Activated CD8-positive, alpha-beta T cell treated with anti-CD3 and anti-CD28 coated beads, Interleukin-2, amount 10 ng/mL, durations not matched to agents 7 days and 5 days (primary cell): ENCODE measurements at regions of chr11 and their contacts with region 1.

Region 1: GRCh38 chr11:128695539-128696221 is 1.8 kb downstream of the FLI1 start:
- DNase-seq: peak; percentile 64
- ATAC-seq: peak; percentile 47
- H3K4me3 Mint-ChIP-seq: peak overlapping the region; percentile 93
- H3K27ac Mint-ChIP-seq: peak overlapping the region; percentile 96
- H3K4me1 Mint-ChIP-seq: peaks cover 69% of the 10 kb centered on the region
- H3K27me3 Mint-ChIP-seq: peaks cover 11% of the 10 kb centered on the region

Region 2: GRCh38 chr11:128318856-128319474 is 376.7 kb before region 1 on chr11:
- CTCF ChIA-PET with region 1: no interaction called
- POLR2A ChIA-PET with region 1: no interaction called
- DNase-seq: peak; percentile 84
- ATAC-seq: peak; percentile 84
- H3K4me3 Mint-ChIP-seq: peak overlapping the region; percentile 7
- H3K27ac Mint-ChIP-seq: peak overlapping the region; percentile 66
- H3K4me1 Mint-ChIP-seq: peaks cover 84% of the 10 kb centered on the region
- H3K27me3 Mint-ChIP-seq: no peaks in the 10 kb centered on the region

Region 3: DNA sequence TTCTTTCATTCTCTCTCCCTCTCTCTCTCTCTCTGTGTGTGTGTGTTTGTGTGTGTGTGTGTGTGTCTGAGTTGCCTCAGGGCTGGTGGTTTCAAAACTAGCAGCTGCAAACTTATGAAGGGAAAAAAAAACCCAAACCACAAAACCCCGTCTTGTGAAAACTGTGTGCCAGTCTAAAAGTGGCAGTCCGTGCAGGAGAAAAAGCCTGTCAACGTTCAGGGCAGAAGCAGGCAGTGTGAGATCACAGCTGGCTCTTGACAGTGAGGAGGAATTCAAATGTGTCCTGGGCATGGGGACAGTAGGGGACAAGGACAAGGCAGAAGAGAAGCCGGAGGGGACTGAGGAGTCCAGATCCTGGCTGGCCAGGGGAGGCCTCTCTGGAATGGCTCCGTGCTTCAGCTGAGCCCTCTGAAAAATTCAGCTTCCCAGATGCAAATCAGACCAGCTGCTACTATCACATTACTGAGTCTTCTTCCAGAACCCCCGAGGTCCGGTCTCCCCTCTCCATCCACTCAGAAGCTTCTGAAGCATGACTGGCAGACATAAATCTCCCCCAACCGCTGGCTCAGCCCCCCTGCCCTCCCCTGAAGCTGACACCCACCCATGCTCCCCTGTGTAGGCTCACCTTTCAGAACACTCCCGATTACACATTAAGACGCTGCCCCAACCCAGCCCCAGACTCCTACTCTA is 30.1 kb after region 1 on chr11:
- CTCF ChIA-PET with region 1: interaction called, 3 read pairs
- POLR2A ChIA-PET with region 1: interaction called, 14 read pairs
- DNase-seq: peak; percentile 78
- ATAC-seq: peak; percentile 47
- H3K4me3 Mint-ChIP-seq: peak overlapping the region; percentile 66
- H3K27ac Mint-ChIP-seq: peak overlapping the region; percentile 91
- H3K4me1 Mint-ChIP-seq: peaks cover 99% of the 10 kb centered on the region
- H3K27me3 Mint-ChIP-seq: no peaks in the 10 kb centered on the region

Region 4: DNA sequence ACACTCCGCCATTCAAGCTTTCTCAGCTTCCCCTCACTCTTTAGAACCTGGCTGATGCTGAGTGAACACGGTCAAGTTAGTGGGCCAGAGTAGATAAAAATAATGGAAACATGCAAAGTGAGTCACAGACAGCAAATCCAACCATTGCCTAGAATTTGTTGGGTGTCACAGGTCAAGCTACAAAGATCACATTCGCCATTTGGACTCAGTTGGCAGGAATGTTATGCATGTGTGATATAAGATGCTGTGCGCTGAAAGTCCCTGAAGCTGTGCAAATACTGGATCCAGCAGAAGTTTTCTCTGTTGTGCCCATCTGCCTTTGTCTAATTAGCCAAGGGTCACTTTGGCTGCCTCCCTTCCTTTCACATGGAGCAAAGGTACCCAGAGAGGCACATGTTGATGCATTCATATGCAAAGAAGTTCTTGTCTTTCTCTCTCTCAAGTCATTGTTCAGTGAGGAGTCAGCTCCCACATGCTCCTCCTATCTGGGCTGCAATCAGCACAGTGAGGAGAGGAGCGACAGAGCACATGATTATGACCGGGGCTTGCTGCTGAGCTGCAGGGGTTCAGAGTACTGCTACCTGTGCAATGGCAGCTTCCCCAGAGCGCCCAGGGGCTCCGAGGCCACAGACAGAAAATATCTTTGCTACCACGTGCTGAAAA is 37.9 kb after region 1 on chr11:
- CTCF ChIA-PET with region 1: interaction called, 6 read pairs
- POLR2A ChIA-PET with region 1: interaction called, 14 read pairs
- DNase-seq: peak; percentile 51
- ATAC-seq: peak; percentile 53
- H3K4me3 Mint-ChIP-seq: peak overlapping the region; percentile 61
- H3K27ac Mint-ChIP-seq: peak overlapping the region; percentile 78
- H3K4me1 Mint-ChIP-seq: peaks cover 98% of the 10 kb centered on the region
- H3K27me3 Mint-ChIP-seq: no peaks in the 10 kb centered on the region